ENCODE measurements at regions of chr4 and their contacts with region 1.

Region 1: GRCh38 chr4:185965426-185966384 is 103.3 kb upstream of the TLR3 start:
- DNase-seq: no peak
- ATAC-seq: no peak
- H3K4me3 ChIP-seq: no peak overlapping the region
- H3K27ac ChIP-seq: no peak overlapping the region
- H3K4me1 ChIP-seq: no peaks in the 10 kb centered on the region
- H3K27me3 ChIP-seq: no peaks in the 10 kb centered on the region
- CTCF ChIP-seq: no peak

Region 2: DNA sequence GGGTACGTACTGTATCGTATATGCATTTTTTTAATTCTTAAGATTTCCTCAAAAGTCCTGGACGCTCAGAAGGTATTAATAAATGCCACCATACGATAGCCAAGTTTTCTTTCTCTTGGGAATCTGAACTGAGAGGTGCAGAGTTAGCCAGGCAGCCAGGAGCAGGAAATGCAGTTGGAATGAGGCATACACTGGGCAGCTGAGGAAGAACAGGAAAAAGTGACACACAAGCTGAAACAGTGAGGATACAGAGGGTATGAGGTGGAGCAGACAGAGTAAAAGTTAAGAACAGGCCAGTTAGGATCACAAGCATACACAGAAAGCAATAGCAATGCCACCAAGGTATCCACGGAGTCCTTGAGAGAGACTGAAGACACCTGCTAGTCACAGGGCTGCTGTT is 553.3 kb before region 1 on chr4:
- CTCF ChIA-PET with region 1: no interaction called
- POLR2A ChIA-PET with region 1: no interaction called
- in situ Hi-C with region 1: no loop called
- intact Hi-C with region 1: no loop called
- DNase-seq: no peak
- ATAC-seq: no peak
- H3K4me3 ChIP-seq: no peak overlapping the region
- H3K27ac ChIP-seq: no peak overlapping the region
- H3K4me1 ChIP-seq: no peaks in the 10 kb centered on the region
- H3K27me3 ChIP-seq: no peaks in the 10 kb centered on the region
- CTCF ChIP-seq: no peak

Region 3: GRCh38 chr4:185566972-185567371 is 398.7 kb before region 1 on chr4:
- CTCF ChIA-PET with region 1: no interaction called
- POLR2A ChIA-PET with region 1: interaction called, 10 read pairs
- in situ Hi-C with region 1: no loop called
- intact Hi-C with region 1: no loop called
- DNase-seq: no peak
- ATAC-seq: no peak
- H3K4me3 ChIP-seq: no peak overlapping the region
- H3K27ac ChIP-seq: no peak overlapping the region
- H3K4me1 ChIP-seq: no peaks in the 10 kb centered on the region
- H3K27me3 ChIP-seq: no peaks in the 10 kb centered on the region
- CTCF ChIP-seq: no peak

Region 4: GRCh38 chr4:186074189-186074588 is 108.5 kb after region 1 on chr4:
- CTCF ChIA-PET with region 1: no interaction called
- POLR2A ChIA-PET with region 1: no interaction called
- in situ Hi-C with region 1: no loop called
- intact Hi-C with region 1: no loop called
- DNase-seq: no peak
- ATAC-seq: no peak
- H3K4me3 ChIP-seq: no peak overlapping the region
- H3K27ac ChIP-seq: no peak overlapping the region
- H3K4me1 ChIP-seq: no peaks in the 10 kb centered on the region
- H3K27me3 ChIP-seq: peaks cover 2% of the 10 kb centered on the region
- CTCF ChIP-seq: no peak

Measured in Panc1 (cell line).